Activated T-helper 1 cell treated with anti-CD3 and anti-CD28 coated beads, Interleukin-12 subunit alpha, Interleukin-12 subunit beta, Interleukin-2, Interleukin-4 antibody, amounts not matched to agents 30 ng/mL and 10 ng/mL and 1 ng/mL, durations not matched to agents 14 hours and 24 hours and 36 hours (primary cell): ENCODE measurements at regions of chr17 and their contacts with region 1.

Region 1: GRCh38 chr17:38982858-38983746 is 15.9 kb upstream of the FBXO47 start:
- DNase-seq: peak; percentile 12
- H3K4me3 Mint-ChIP-seq: no peak overlapping the region
- H3K27ac Mint-ChIP-seq: no peak overlapping the region
- H3K4me1 Mint-ChIP-seq: peaks cover 8% of the 10 kb centered on the region
- H3K27me3 Mint-ChIP-seq: peaks cover 6% of the 10 kb centered on the region

Region 2: DNA sequence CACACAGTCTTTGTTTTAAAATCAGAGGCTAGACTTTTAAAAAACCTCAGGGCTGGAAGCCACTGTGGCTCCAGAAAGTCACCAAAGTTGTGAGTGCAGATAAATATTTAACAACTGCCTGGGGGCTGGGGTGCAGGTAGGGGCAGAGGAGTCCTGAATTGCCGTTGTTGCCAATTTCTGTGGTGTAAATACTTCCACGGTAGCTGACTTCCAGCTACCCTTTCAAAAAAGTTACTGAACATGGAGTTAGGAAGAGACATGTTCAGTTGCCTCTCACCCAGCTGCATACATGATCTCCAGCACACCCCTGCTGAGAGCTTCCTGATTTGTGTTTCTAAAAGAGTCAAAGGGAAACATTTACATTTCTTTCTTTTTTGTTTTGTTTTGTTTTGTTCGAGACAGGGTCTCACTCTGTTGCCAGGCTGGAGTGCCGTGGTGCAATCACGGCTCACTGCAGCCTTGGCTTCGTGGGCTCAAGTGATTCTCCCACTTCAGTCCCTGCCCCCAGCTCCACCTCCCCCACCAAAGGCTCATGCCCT is 109.7 kb after region 1 on chr17:
- intact Hi-C with region 1: loop called (anchors 1 kb)
- DNase-seq: no peak
- H3K4me3 Mint-ChIP-seq: peak overlapping the region; percentile 67
- H3K27ac Mint-ChIP-seq: peak overlapping the region; percentile 13
- H3K4me1 Mint-ChIP-seq: peaks cover 57% of the 10 kb centered on the region
- H3K27me3 Mint-ChIP-seq: no peaks in the 10 kb centered on the region

Region 3: GRCh38 chr17:39174907-39175694 is 192.0 kb after region 1 on chr17:
- intact Hi-C with region 1: loop called (anchors 1 kb)
- DNase-seq: peak; percentile 58
- H3K4me3 Mint-ChIP-seq: no peak overlapping the region
- H3K27ac Mint-ChIP-seq: no peak overlapping the region
- H3K4me1 Mint-ChIP-seq: peaks cover 7% of the 10 kb centered on the region
- H3K27me3 Mint-ChIP-seq: peaks cover 5% of the 10 kb centered on the region

Region 4: DNA sequence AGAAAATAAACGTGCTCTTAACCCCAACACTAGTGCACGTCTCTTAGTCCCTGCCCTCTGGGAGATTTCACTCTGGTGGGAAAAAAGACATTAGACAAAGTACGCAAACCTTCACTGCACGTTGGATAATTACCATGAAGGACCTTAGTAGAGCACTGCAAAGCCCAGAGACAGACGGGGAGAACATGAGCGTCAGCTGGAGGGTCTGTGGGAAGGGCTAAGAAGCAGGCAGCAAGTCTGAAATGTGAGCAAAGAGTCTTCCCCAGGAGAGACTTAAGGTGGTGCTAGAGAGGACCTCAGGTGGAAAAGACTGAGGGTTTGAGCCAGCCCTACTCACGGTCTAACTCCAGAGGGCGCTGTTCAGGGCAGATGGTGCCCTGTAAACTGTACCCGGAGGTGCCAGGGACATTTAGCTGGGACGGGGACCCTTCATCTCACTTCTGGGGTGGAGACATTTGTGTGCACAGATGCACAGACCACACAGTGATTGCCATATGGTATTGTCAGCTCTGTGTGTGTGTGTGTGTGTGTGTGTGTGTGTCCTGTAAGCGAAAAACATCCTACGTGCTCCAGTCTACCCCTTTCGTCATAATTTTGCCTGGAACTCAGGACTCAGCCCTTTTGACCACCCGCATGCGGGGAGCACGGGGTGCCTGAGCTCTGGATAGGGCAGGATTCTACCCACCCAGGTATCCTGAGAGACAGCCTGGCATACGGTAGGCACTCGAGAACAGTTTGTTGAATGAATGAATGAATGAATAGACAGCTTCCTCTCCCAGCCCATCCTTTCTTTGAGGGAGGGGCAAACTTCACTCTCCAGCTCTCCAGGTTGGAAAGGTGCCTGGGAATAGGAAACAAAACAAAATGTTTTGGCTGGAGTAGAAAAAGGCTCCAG is 252.7 kb after region 1 on chr17:
- intact Hi-C with region 1: loop called (anchors 5 kb)
- DNase-seq: peak; percentile 25
- H3K4me3 Mint-ChIP-seq: no peak overlapping the region
- H3K27ac Mint-ChIP-seq: no peak overlapping the region
- H3K4me1 Mint-ChIP-seq: peaks cover 21% of the 10 kb centered on the region
- H3K27me3 Mint-ChIP-seq: peaks cover 5% of the 10 kb centered on the region

Region 5: GRCh38 chr17:39244600-39245570 is 261.8 kb after region 1 on chr17:
- intact Hi-C with region 1: loop called (anchors 1 kb)
- DNase-seq: peak; percentile 73
- H3K4me3 Mint-ChIP-seq: no peak overlapping the region
- H3K27ac Mint-ChIP-seq: no peak overlapping the region
- H3K4me1 Mint-ChIP-seq: peaks cover under 1% of the 10 kb centered on the region
- H3K27me3 Mint-ChIP-seq: peaks cover 6% of the 10 kb centered on the region